ENCODE measurements at regions of chr3 and their contacts with region 1.

Region 1: DNA sequence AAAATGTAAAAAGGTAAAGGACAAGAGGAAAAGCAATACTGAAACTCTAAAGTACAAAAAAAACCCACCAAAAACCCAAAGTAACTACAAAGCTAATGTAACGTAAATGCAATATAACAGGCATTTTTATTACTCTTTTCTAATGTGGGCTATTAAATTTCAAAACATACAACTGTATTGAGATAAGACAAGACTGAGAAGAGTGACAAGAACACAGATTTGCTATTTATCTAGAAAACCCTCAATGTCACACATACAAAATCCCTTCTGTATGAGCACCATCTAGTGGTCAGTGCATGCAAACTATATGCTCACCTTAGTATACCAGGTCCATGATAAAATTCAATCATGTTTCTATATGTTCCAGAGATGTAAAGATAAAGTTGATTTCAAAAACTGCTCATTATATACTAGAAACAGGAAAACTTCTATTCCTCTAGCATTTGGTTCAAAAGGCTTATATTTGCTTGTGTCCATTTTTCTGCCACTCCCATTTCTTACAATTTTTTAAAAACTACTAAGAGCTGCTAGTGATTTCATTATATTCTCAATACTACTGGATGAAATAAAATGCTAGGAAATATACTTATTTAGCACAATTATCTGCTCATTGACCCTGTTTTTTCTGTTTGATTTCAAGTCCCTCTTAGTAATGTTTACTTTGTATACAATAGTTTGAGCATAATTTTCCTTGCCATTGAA is 111.4 kb downstream of the DLG1 start:
- DNase-seq: peak in 4 of 14 experiments; percentile 23 to 75 (median 66)
- ATAC-seq: peak; percentile 86
- H3K4me3 ChIP-seq: no peak overlapping the region
- H3K4me3 Mint-ChIP-seq: no peak overlapping the region
- H3K27ac ChIP-seq: no peak overlapping the region
- H3K27ac Mint-ChIP-seq: no peak overlapping the region
- H3K4me1 ChIP-seq: no peaks in the 10 kb centered on the region
- H3K4me1 Mint-ChIP-seq: peaks cover 18% of the 10 kb centered on the region
- H3K27me3 ChIP-seq: no peaks in the 10 kb centered on the region
- H3K27me3 Mint-ChIP-seq: no peaks in the 10 kb centered on the region
- CTCF ChIP-seq: peak; percentile 97

Region 2: GRCh38 chr3:196837819-196838420 is 349.1 kb before region 1 on chr3:
- CTCF ChIA-PET with region 1: no interaction called
- POLR2A ChIA-PET with region 1: no interaction called
- intact Hi-C with region 1: loop called (anchors 2 to 5 kb)
- DNase-seq: peak; percentile 54 to 87 (median 68)
- ATAC-seq: peak; percentile 95
- H3K4me3 ChIP-seq: no peak overlapping the region
- H3K4me3 Mint-ChIP-seq: no peak overlapping the region
- H3K27ac ChIP-seq: no peak overlapping the region
- H3K27ac Mint-ChIP-seq: peak overlapping the region; percentile 8
- H3K4me1 ChIP-seq: no peaks in the 10 kb centered on the region
- H3K4me1 Mint-ChIP-seq: no peaks in the 10 kb centered on the region
- H3K27me3 ChIP-seq: no peaks in the 10 kb centered on the region
- H3K27me3 Mint-ChIP-seq: no peaks in the 10 kb centered on the region
- CTCF ChIP-seq: peak; percentile 76

Region 3: DNA sequence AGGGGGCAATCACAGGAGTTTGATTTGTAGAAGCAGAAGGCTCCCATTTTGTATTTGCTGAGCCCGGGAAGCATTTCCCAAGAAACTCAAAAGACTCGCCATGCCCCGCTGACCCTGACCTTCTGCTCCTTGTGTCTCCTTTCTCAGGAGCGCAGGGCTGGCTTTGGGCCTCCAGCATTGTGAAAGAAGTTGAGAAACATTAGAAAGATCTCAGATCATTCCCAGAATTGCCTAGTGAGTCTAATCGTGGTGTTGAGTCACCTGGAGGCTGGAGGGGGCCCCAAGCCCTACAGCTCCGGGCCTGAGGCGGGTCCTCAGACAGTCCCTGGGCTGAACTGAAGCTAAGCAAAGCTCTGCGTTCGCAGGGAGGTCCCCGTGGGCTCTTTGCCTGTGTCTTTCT is 207.5 kb before region 1 on chr3:
- CTCF ChIA-PET with region 1: no interaction called
- POLR2A ChIA-PET with region 1: no interaction called
- intact Hi-C with region 1: loop called (anchors 2 kb)
- DNase-seq: peak in 1 of 14 experiments; percentile 16
- ATAC-seq: no peak
- H3K4me3 ChIP-seq: no peak overlapping the region
- H3K4me3 Mint-ChIP-seq: no peak overlapping the region
- H3K27ac ChIP-seq: no peak overlapping the region
- H3K27ac Mint-ChIP-seq: no peak overlapping the region
- H3K4me1 ChIP-seq: peaks cover 7% of the 10 kb centered on the region
- H3K4me1 Mint-ChIP-seq: no peaks in the 10 kb centered on the region
- H3K27me3 ChIP-seq: peaks cover 0 to 5% of the 10 kb centered on the region in 2 experiments
- H3K27me3 Mint-ChIP-seq: peaks cover 22% of the 10 kb centered on the region
- CTCF ChIP-seq: no peak

Region 4: DNA sequence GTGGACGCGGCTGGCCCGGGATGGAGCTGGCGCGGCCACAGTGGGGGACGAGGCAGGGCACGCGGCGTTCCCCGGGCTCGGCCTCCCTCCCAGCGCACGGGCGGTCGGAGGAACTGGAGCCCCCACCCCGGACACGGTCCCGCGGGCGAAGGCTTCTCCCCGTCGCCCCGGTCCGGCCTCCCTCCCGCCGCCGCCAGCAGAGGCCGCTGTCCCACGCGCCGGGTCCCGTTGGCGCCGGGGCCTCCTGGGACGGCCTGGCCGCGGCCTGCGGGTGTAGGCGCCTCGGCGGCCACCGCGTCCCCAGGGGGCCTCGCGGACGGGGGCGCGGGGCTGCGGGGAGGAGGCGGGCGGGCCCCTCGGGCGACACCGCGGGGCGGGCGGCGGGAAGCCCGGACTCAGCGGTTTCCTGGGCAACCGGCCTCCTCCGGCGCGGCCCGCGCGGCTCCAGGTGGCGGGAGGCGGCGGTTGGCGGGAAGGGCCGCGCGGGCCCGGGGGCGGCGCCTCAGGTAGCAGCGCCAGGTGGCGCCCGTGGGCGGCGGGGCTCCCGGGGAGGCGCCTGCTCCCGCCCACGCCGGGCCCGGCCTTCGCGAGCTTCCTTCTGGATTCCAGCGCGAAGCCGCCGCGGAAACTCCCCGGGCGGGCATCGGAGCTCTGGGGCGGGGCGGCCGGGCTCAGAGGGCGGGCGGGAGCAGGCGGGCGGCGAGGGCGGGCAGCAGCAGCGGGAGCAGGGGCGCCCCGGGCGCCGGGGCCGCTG is 184.2 kb before region 1 on chr3:
- CTCF ChIA-PET with region 1: interaction called, 3 read pairs
- POLR2A ChIA-PET with region 1: interaction called, 3 read pairs
- intact Hi-C with region 1: loop called (anchors 2 to 10 kb)
- DNase-seq: peak; percentile 49 to 94 (median 72)
- ATAC-seq: peak; percentile 84
- H3K4me3 ChIP-seq: peak overlapping the region; percentile 61
- H3K4me3 Mint-ChIP-seq: no peak overlapping the region
- H3K27ac ChIP-seq: no peak overlapping the region
- H3K27ac Mint-ChIP-seq: no peak overlapping the region
- H3K4me1 ChIP-seq: peaks cover 16% of the 10 kb centered on the region
- H3K4me1 Mint-ChIP-seq: peaks cover 8% of the 10 kb centered on the region
- H3K27me3 ChIP-seq: no peaks in the 10 kb centered on the region
- H3K27me3 Mint-ChIP-seq: no peaks in the 10 kb centered on the region
- CTCF ChIP-seq: peak; percentile 62

Measured in CD4-positive, alpha-beta T cell (primary cell).